A673 (cell line): ENCODE measurements at regions of chr17 and their contacts with region 1.

Region 1: GRCh38 chr17:12789075-12789776 is at the start of gene ARHGAP44:
- DNase-seq: peak; percentile 58
- H3K4me3 ChIP-seq: peak within 1 kb of the TSS; percentile 57
- H3K27ac ChIP-seq: no peak within 1 kb of the TSS
- H3K4me1 ChIP-seq: no peaks in the 10 kb centered on the region
- H3K27me3 ChIP-seq: peaks cover 30% of the 10 kb centered on the region
- CTCF ChIP-seq: no peak
- total RNA-seq, gene ARHGAP44: 0.42 and 0.49 TPM in 2 replicates

Region 2: DNA sequence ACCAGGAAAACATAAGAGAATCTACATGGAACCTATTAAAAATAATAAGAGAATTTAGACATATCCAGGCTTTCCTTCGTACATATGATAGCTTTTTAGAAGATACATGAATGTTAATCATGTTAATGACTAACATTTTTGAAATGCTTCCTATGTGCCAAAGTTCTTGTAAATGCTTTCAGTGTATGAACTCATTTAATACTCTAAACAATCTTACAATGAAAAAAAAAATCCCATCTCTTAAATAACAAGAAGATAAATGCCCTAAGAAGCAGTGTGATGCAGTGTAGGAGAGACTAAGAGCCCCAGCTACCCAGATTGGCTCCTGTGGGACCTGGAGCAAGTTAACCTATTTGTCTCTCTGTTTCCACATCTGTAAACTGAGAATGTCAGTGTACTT is 343.9 kb before region 1 on chr17:
- CTCF ChIA-PET with region 1: interaction called, 11 read pairs
- POLR2A ChIA-PET with region 1: no interaction called
- intact Hi-C with region 1: no loop called
- DNase-seq: no peak
- H3K4me3 ChIP-seq: no peak overlapping the region
- H3K27ac ChIP-seq: no peak overlapping the region
- H3K4me1 ChIP-seq: no peaks in the 10 kb centered on the region
- H3K27me3 ChIP-seq: no peaks in the 10 kb centered on the region
- CTCF ChIP-seq: no peak